ENCODE measurements at regions of chr17 and their contacts with region 1.

Region 1: DNA sequence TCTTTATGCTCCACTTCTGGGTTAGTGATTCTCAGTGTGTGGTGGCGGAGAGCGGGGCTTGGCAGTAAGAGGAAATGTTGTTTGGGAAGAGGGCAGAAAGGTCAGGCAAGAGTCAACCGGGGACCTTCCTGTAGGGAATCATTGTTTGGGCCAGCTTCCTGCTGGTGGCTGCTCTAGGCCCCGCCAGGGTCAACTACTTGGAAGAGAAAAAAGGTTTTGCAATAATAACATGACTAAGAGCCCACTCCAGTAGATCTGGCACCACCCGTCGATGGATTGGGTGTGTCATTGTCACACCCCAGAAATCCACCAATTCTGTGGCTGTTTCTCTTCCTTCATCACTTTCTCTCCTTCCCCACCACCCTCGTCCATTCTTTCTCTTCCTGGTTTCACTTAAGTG is 4.2 kb upstream of the KRT24 start:
- DNase-seq: peak; percentile 85
- H3K4me3 ChIP-seq: no peak overlapping the region
- H3K27ac ChIP-seq: no peak overlapping the region
- H3K4me1 ChIP-seq: peaks cover 12% of the 10 kb centered on the region
- H3K27me3 ChIP-seq: peaks cover 4 to 10% of the 10 kb centered on the region in 2 experiments
- CTCF ChIP-seq: no peak
- POLR2A ChIP-seq: no peak

Region 2: GRCh38 chr17:40664582-40665333 is 43.0 kb before region 1 on chr17 and contains the start of gene KRT222:
- CTCF ChIA-PET with region 1: no interaction called
- POLR2A ChIA-PET with region 1: no interaction called
- dilution Hi-C with region 1: no loop called
- intact Hi-C with region 1: loop called (anchors 5 kb)
- DNase-seq: no peak
- H3K4me3 ChIP-seq: no peak within 1 kb of the TSS
- H3K27ac ChIP-seq: no peak within 1 kb of the TSS
- H3K4me1 ChIP-seq: no peaks in the 10 kb centered on the region
- H3K27me3 ChIP-seq: peaks cover 19 to 40% of the 10 kb centered on the region in 2 experiments
- CTCF ChIP-seq: no peak
- POLR2A ChIP-seq: no peak
- total RNA-seq, gene KRT222: not detected in 2 replicates

Region 3: DNA sequence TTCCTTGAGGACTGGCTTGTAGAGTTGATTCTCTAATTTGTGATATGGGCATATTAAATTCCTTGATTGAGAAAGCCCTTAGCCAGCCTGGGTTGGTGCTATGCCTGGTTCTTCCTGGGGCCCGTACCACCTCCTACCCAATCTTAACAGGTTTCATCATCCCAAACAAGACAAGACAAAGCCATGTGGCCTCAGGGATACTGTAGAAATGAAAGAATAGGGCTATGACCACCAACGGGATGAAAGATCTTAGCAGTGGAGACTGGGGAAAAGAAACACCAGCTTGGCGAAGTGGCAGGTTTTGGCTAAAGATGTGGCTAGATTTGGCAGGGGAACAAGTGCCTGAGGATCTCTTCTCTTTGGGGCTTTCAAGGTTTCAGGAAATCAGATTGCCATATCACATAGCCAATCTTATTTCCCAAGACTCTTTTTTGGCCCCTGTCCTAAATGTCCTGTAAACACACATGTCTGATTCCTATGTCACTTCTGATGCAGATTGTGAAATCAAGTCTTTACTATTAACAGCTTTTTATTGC is 11.1 kb before region 1 on chr17:
- CTCF ChIA-PET with region 1: interaction called, 12 read pairs
- POLR2A ChIA-PET with region 1: no interaction called
- dilution Hi-C with region 1: no loop called
- intact Hi-C with region 1: no loop called
- DNase-seq: no peak
- H3K4me3 ChIP-seq: no peak overlapping the region
- H3K27ac ChIP-seq: no peak overlapping the region
- H3K4me1 ChIP-seq: no peaks in the 10 kb centered on the region
- H3K27me3 ChIP-seq: peaks cover 3 to 8% of the 10 kb centered on the region in 2 experiments
- CTCF ChIP-seq: no peak
- POLR2A ChIP-seq: no peak

Region 4: DNA sequence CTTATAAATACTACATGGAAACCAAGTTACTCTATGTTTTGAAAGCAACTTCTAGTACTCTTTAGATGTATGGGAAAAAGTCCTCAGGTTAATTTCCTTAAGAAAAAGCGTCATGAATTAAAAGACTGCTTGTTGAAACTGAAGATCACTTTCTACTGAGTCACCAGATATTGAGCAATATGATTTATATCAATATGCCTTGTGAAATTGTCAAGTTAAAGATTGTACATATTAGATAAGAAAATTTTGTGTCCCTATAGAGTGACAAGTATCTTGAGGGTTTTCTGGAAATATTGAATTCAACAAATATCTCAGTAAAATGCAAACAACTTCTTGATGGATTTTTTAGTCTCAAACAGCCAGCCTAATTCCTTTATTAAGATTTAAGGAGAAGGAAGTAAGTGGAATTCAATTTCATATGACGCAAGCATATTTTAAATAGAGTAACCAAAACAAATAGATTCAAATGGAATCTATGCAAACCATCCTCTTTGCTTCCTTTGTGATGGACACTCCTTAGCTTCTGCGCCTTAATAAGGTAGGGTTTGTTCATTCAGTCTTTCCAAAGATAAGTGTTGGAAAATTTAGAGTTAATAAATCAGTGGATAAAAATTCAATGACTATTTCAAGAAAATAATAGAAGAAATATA is 142.7 kb after region 1 on chr17:
- CTCF ChIA-PET with region 1: no interaction called
- POLR2A ChIA-PET with region 1: no interaction called
- dilution Hi-C with region 1: no loop called
- intact Hi-C with region 1: no loop called
- DNase-seq: no peak
- H3K4me3 ChIP-seq: no peak overlapping the region
- H3K27ac ChIP-seq: no peak overlapping the region
- H3K4me1 ChIP-seq: peaks cover 8% of the 10 kb centered on the region
- H3K27me3 ChIP-seq: peaks cover 7 to 10% of the 10 kb centered on the region in 2 experiments
- CTCF ChIP-seq: no peak
- POLR2A ChIP-seq: no peak

Measured in endothelial cell of umbilical vein (primary cell).